AG04449 (cell line): ENCODE measurements at regions of chr15 and their contacts with region 1.

Region 1: GRCh38 chr15:60520825-60521368 is 42.0 kb upstream of the ICE2 start:
- DNase-seq: no peak
- H3K4me3 ChIP-seq: no peak overlapping the region
- CTCF ChIP-seq: peak; percentile 71

Region 2: GRCh38 chr15:60326824-60327654 is 193.9 kb before region 1 on chr15:
- CTCF ChIA-PET with region 1: interaction called, 123 read pairs
- POLR2A ChIA-PET with region 1: no interaction called
- DNase-seq: no peak
- H3K4me3 ChIP-seq: no peak overlapping the region
- CTCF ChIP-seq: peak; percentile 69

Region 3: GRCh38 chr15:60362321-60363086 is 158.4 kb before region 1 on chr15:
- CTCF ChIA-PET with region 1: interaction called, 19 read pairs
- POLR2A ChIA-PET with region 1: no interaction called
- DNase-seq: no peak
- H3K4me3 ChIP-seq: no peak overlapping the region
- CTCF ChIP-seq: no peak

Region 4: DNA sequence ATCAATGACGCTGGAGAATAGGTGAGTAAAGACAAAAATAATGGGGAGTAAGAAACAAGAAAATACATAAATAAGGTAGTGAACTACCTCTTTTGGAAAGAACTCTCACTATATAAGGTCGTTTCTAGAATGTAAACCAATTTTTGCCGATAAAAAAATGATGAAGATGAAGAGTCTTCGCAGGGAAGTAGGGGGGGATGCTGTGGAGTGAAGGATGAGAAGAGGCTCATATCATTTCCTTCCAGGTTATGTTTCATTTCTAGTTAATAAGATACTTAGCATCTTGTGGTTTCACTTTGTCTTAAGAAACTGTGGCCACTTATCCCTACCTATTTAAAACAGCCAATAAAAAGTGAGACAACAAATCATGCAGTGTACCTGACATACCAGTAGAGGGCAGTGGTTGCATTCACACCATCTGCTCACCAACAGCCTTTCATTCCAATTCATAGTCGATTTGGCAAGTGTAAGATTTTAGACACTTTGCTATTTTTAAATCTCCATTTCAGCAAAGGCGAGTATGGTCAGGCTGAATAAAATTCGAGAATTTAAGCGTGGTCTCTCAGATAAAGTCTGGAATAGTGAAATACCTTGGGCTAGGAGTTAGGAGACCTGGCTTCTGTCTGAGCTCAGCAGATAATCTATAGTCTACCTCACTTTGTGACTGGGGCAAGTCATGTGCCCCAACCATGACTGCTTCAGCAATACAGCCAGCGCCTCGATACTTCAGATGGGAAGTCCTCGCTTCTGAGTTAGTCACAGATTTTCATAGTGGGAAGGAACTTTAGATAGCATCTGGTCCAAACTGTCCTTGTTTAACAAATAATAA is 13.1 kb before region 1 on chr15:
- CTCF ChIA-PET with region 1: interaction called, 125 read pairs
- POLR2A ChIA-PET with region 1: no interaction called
- DNase-seq: peak; percentile 24
- H3K4me3 ChIP-seq: no peak overlapping the region
- CTCF ChIP-seq: peak; percentile 78

Region 5: GRCh38 chr15:60585743-60586708 is 65.1 kb after region 1 on chr15:
- CTCF ChIA-PET with region 1: interaction called, 14 read pairs
- POLR2A ChIA-PET with region 1: no interaction called
- DNase-seq: no peak
- H3K4me3 ChIP-seq: no peak overlapping the region
- CTCF ChIP-seq: peak; percentile 72